ENCODE measurements at regions of chr16 and their contacts with region 1.

Region 1: DNA sequence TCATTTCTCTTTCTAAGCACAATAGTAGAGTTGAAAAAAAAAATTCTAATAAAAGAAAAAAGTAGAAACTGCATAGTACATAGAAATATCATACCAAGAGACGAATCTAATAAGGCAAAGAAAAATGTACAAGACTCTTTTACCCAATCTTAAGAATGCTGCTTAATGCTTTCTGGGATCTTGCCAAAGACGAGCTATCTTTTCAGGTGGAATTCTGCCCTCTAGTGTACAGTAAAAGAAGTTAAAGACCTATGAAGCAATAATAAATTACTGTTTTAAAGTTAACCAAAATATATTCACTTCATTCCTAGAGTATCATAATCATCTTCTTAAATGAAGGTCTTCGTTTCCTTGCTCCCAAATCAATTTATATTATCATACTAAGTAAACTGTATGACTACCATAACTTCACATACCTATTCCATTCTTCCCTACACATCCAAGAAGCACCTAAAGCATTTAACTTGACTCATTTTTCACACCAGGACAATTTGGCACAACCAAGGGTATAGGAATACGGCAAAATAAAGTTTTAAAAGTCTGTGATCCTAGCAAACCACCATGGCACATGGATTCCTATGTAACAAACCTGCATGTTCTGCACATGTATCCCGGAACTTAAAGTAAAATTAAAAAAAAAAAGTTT is 47.7 kb downstream of the CFDP1 start:
- DNase-seq: peak; percentile 68
- ATAC-seq: no peak
- H3K4me3 ChIP-seq: no peak overlapping the region
- H3K27ac ChIP-seq: no peak overlapping the region
- H3K4me1 ChIP-seq: no peaks in the 10 kb centered on the region
- H3K27me3 ChIP-seq: no peaks in the 10 kb centered on the region
- CTCF ChIP-seq: peak; percentile 74
- EP300 ChIP-seq: no peak
- POLR2A ChIP-seq: no peak
- RAD21 ChIP-seq: peak; percentile 69; the same call in 1 of the 2 replicates

Region 2: GRCh38 chr16:75238132-75238852 is 147.3 kb before region 1 on chr16:
- CTCF ChIA-PET with region 1: interaction called, 45 read pairs
- POLR2A ChIA-PET with region 1: interaction called, 3 read pairs
- in situ Hi-C with region 1: no loop called
- intact Hi-C with region 1: loop called (anchors 1 kb)
- DNase-seq: peak; percentile 89
- ATAC-seq: peak; percentile 42
- H3K4me3 ChIP-seq: peak overlapping the region in 1 of 3 experiments; percentile 17; a peak in 1 of 6 replicates
- H3K27ac ChIP-seq: peak overlapping the region; percentile 77
- H3K4me1 ChIP-seq: peaks cover 59% of the 10 kb centered on the region
- H3K27me3 ChIP-seq: no peaks in the 10 kb centered on the region
- CTCF ChIP-seq: no peak
- EP300 ChIP-seq: peak in 1 of 2 experiments; percentile 65; a peak in 3 of 4 replicates
- POLR2A ChIP-seq: no peak
- RAD21 ChIP-seq: no peak

Measured in HepG2 (cell line).